Naive thymus-derived CD4-positive, alpha-beta T cell (primary cell): ENCODE measurements at regions of chr2 and their contacts with region 1.

Region 1: DNA sequence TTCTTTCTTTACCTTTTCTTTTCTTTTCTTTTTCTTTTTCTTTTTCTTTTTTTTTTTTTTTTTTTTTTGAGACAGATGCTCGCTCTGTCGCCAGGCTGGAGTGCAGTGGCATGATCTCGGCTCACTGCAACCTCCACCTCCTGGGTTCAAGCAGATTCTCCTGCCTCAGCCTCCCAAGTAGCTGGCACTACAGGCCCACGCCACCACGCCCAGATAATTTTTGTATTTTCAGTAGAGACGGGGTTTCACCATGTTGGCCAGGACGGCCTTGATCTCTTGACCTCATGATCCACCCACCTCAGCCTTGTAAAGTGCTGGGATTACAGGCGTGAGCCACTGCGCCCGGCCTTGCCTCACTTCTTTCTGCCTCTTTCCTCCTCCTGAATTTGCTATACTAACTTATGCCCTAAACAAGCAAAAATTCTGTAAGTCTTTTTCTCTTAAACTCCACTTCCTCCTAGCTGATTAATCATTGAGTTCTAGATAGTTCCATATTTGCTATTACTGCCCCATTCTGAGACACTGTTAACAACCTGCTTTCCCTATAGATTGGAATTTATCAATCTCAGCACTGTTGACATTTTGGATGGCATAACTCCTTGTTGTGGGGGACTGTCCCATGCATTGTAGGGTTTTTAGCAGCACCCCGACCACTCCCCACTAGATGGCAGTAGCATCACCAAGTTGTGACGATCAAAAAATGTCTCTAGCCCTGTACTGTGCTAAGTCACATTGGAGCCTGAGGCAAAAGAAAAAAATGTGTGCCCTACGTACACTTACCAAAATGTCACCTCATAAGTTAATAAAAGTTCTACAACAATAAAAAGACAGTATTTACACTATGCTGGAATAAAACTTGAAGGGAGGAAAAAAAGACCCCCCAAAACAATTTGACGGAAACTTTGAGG is 16.4 kb upstream of the THADA start:
- DNase-seq: peak; percentile 27 to 76 (median 69)
- ATAC-seq: peak; percentile 99
- H3K4me3 ChIP-seq: no peak overlapping the region
- H3K4me3 Mint-ChIP-seq: no peak overlapping the region
- H3K27ac ChIP-seq: no peak overlapping the region
- H3K27ac Mint-ChIP-seq: no peak overlapping the region
- H3K4me1 ChIP-seq: no peaks in the 10 kb centered on the region
- H3K4me1 Mint-ChIP-seq: peaks cover 0 to 11% (median 0%) of the 10 kb centered on the region in 7 donors
- H3K27me3 ChIP-seq: peaks cover 0 to 1% of the 10 kb centered on the region in 2 donors
- H3K27me3 Mint-ChIP-seq: peaks cover 0 to 10% (median 7%) of the 10 kb centered on the region in 5 donors

Region 2: DNA sequence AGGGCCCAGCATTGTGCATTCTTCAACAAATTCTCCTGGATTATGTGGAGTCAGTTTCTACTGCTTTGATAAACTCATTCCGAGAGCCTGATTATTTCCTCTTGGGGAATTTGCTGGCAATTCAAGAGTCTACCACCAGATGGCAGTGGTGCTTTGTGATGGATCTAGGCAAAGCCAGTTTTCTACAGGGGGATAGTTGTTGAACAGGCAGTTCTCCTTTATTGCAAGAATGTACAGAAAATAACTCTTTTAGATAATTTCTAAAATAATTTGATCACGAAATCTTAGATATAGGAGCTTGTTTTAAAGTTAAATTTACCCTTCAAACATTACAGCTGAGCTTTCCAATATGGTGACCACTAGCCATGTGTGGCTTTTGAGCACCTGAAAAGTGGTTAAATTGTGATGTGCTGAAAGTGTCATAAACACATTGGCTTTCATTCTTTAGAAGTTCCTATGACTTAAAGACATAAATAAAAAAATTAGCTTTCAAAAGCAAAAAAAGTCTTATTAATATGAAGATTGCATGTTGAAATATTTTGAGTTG is 753.2 kb before region 1 on chr2:
- CTCF ChIA-PET with region 1: interaction called, 3 read pairs
- POLR2A ChIA-PET with region 1: no interaction called
- intact Hi-C with region 1: loop called (anchors 1 kb)
- DNase-seq: peak; percentile 15 to 75 (median 58)
- ATAC-seq: peak; percentile 72
- H3K4me3 ChIP-seq: no peak overlapping the region
- H3K4me3 Mint-ChIP-seq: no peak overlapping the region
- H3K27ac ChIP-seq: no peak overlapping the region
- H3K27ac Mint-ChIP-seq: no peak overlapping the region
- H3K4me1 ChIP-seq: no peaks in the 10 kb centered on the region
- H3K4me1 Mint-ChIP-seq: peaks cover 0 to 4% (median 0%) of the 10 kb centered on the region in 7 donors
- H3K27me3 ChIP-seq: no peaks in the 10 kb centered on the region
- H3K27me3 Mint-ChIP-seq: peaks cover 0 to 3% (median 0%) of the 10 kb centered on the region in 5 donors

Region 3: DNA sequence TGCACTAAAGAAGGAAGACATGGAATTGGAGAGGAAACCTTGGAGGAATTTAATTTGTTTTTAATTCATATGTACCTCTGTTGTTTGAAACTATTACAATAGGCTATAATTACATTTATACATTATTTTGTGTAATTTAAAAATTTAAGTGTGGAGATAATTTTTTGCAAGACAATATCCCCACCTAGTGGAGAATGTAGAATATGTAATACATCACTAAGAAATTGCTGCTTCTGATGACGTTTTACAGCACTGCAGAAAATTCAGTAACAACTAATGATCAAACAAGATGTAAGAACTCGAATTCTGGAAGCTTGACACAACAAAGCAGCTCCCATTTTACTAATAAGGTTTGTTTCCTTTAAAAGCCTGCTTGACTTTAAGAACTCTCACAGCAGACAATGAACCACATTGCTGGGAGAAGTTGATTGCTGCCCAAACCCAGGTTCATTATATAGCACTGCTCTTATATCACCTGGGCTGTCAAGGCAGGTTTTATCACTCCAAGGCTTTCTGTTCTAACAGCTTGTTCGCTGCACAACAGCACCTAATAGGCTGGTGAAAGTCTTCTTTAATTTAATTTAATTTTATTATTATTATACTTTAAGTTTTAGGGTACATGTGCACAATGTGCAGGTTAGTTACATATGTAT is 69.8 kb before region 1 on chr2:
- CTCF ChIA-PET with region 1: no interaction called
- POLR2A ChIA-PET with region 1: no interaction called
- intact Hi-C with region 1: loop called in 1 of 2 experiments (anchors 1 kb)
- DNase-seq: peak in 7 of 9 donors; percentile 43 to 70 (median 48)
- ATAC-seq: peak; percentile 82
- H3K4me3 ChIP-seq: no peak overlapping the region
- H3K4me3 Mint-ChIP-seq: no peak overlapping the region
- H3K27ac ChIP-seq: no peak overlapping the region
- H3K27ac Mint-ChIP-seq: no peak overlapping the region
- H3K4me1 ChIP-seq: peaks cover 0 to 3% of the 10 kb centered on the region in 2 donors
- H3K4me1 Mint-ChIP-seq: peaks cover 9 to 18% (median 15%) of the 10 kb centered on the region in 7 donors
- H3K27me3 ChIP-seq: no peaks in the 10 kb centered on the region
- H3K27me3 Mint-ChIP-seq: no peaks in the 10 kb centered on the region

Region 4: DNA sequence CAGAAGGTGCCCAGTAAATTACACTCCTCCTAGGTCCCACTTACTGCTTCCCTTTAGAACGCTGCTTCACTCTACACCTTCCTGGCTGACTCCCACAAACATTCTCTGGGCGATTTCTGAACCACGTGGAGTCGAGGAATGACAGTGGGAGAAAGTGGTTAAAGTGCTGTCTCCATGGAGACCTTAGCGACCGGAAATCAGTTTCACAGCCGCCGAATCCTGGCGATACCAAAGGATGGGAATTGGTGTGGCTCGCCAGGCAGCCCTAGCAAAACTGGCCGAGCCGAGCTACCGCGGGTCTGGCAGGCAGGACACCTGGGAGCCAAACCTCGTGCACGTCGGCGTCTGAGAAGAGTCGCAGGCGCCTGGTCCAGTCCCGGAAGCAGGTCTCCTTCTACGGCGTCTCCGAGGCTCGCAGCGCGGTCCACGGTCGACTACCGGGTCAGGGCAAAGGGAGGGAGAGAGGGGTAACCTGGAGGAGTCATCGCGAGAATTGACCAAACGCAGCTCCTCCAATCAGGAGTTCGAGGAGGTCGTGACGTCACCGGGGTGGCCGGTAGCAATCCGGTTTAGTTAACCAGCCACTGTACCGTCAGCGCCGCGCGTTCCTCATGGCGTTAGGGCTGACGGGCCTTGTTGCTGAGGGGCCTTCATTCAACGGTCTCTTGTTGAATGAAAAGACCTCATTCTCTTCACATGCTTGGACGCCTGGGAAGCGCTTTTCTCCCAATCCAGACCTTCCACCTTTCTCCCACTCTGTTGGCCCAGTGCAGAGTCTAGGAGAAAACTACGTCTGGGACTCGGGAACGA is 16.4 kb before region 1 on chr2 and contains the start of gene THADA:
- CTCF ChIA-PET with region 1: interaction called, 12 read pairs
- POLR2A ChIA-PET with region 1: interaction called, 3 read pairs
- intact Hi-C with region 1: loop called (anchors 1 kb)
- DNase-seq: peak; percentile 83 to 94 (median 91)
- ATAC-seq: peak; percentile 98
- H3K4me3 ChIP-seq: peak within 1 kb of the TSS; percentile 79
- H3K4me3 Mint-ChIP-seq: peak within 1 kb of the TSS; percentile 82 to 96 (median 94)
- H3K27ac ChIP-seq: peak within 1 kb of the TSS; percentile 87
- H3K27ac Mint-ChIP-seq: peak within 1 kb of the TSS; percentile 90 to 98 (median 97)
- H3K4me1 ChIP-seq: peaks cover 9 to 13% of the 10 kb centered on the region in 2 donors
- H3K4me1 Mint-ChIP-seq: peaks cover 23 to 48% (median 38%) of the 10 kb centered on the region in 7 donors
- H3K27me3 ChIP-seq: no peaks in the 10 kb centered on the region
- H3K27me3 Mint-ChIP-seq: peaks cover 0 to 6% (median 3%) of the 10 kb centered on the region in 5 donors
- total RNA-seq, gene THADA: 34.1 to 43.0 (median 41.0) TPM

Region 5: DNA sequence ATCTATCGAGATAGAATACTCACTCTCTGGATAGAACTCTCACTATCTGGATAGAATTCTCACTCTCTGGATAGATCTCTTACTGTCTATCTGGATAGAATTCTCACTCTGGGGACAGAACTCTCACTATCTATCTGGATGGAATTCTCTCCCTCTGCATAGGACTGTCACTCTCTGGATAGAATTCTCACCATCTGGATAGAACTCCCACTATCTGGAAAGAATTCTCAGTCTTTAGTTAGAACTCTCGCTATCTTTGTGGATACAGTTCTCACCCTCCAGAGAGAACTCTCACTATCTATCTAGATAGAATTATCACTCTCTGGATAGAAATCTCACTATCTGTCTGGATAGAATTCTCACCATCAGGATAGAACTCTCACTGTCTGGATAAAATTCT is 243.1 kb after region 1 on chr2:
- CTCF ChIA-PET with region 1: no interaction called
- POLR2A ChIA-PET with region 1: no interaction called
- intact Hi-C with region 1: loop called in 1 of 2 experiments (anchors 5 kb)
- DNase-seq: no peak
- ATAC-seq: no peak
- H3K4me3 ChIP-seq: no peak overlapping the region
- H3K4me3 Mint-ChIP-seq: no peak overlapping the region
- H3K27ac ChIP-seq: no peak overlapping the region
- H3K27ac Mint-ChIP-seq: no peak overlapping the region
- H3K4me1 ChIP-seq: no peaks in the 10 kb centered on the region
- H3K4me1 Mint-ChIP-seq: no peaks in the 10 kb centered on the region
- H3K27me3 ChIP-seq: peaks cover 0 to 3% of the 10 kb centered on the region in 2 donors
- H3K27me3 Mint-ChIP-seq: peaks cover 8 to 74% (median 61%) of the 10 kb centered on the region in 5 donors